Lower lobe of right lung (tissue), 2 donors: ENCODE measurements at regions of chr3 and their contacts with region 1.

Region 1: DNA sequence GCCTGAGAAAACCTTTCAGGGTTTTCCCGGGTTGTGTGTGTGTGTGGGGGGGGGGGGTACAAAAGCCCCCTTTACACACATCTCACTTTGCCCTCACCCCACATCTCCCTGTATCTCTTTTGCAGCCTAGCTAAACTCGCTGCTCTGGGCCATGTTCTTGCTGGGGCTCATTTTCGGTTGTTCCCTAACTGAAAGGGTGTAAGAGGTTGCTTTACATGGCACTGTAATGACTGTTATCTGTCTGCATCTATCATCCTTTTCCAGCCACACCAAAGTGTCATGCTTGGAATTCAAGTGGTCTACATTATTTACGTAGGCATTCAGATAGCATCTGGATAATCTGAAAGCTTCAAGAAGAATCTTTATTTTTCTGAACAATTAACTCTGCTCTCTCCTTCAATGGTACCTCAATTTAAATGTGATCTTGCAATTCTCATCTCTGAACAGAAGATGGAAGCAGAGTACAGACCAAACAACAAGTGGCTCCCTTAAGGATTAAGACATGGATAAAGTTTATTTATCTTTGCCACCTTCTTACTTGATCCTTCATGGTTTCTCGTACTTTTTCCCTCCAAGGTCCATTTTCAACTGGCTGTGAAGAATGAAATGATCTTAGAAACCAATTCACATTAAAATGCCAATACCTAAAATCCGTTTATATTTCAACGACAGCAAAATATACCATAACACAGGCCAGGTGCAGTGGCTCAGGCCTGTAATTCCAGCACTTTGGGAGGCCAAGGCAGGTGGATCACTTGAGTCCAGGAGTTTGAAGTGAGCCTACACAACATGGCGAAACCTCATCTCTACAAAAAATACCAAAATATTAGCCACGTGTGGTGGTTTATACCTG is 34.9 kb downstream of the DCLK3 start:
- DNase-seq: no peak
- ATAC-seq: peak; percentile 67 to 75
- H3K4me3 ChIP-seq: no peak overlapping the region
- H3K27ac ChIP-seq: no peak overlapping the region
- H3K4me1 ChIP-seq: no peaks in the 10 kb centered on the region
- H3K27me3 ChIP-seq: no peaks in the 10 kb centered on the region
- CTCF ChIP-seq: peak; percentile 70

Region 2: GRCh38 chr3:36843065-36844051 is 113.9 kb after region 1 on chr3:
- intact Hi-C with region 1: no loop called
- DNase-seq: no peak
- ATAC-seq: peak in 1 of 2 donors; percentile 58
- H3K4me3 ChIP-seq: no peak overlapping the region
- H3K27ac ChIP-seq: no peak overlapping the region
- H3K4me1 ChIP-seq: no peaks in the 10 kb centered on the region
- H3K27me3 ChIP-seq: no peaks in the 10 kb centered on the region
- CTCF ChIP-seq: peak; percentile 40

Region 3: DNA sequence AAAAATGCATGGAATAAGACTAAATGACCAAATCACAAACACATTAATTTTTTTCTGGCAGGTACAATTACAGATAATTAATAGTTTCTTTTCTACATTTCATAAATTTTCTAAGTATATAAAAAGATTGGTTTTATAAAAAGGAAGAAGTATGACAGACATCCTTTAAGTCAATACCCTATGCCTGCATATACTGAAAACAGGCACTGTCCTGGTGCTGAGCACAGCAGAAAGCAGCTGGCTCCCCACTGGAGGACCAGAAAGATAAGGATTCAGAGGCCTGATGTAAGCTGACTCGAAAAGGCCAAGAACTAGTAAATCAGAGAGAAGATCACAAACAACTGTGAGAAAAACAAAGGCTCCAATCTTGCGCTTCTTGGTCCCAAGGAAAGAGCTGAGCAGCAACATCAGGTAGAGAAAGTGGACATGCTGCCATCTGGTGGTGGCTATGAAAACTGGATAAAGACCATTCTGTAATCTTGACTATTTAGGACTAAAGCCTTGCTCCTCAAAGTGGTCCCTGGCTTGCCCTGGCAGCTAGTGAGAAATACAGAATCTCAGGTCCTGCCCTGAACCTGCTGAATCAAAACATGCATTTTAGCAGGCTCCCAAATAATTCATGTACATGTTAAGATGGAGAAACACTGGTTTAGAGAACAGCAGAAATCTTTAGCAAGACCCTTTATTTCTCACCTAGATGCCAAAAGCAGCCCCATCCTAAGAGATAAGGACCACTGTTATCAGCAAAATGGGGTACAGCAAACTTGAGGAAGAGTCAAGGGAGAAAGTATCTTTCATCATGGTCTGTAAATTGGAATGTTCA is 139.4 kb after region 1 on chr3:
- intact Hi-C with region 1: loop called (anchors 10 kb)
- DNase-seq: no peak
- ATAC-seq: peak; percentile 80 to 82
- H3K4me3 ChIP-seq: no peak overlapping the region
- H3K27ac ChIP-seq: no peak overlapping the region
- H3K4me1 ChIP-seq: no peaks in the 10 kb centered on the region
- H3K27me3 ChIP-seq: no peaks in the 10 kb centered on the region
- CTCF ChIP-seq: peak; percentile 81